Activated CD8-positive, alpha-beta T cell treated with anti-CD3 and anti-CD28 coated beads for 36 hours (primary cell): ENCODE measurements at regions of chr5 and their contacts with region 1.

Region 1: DNA sequence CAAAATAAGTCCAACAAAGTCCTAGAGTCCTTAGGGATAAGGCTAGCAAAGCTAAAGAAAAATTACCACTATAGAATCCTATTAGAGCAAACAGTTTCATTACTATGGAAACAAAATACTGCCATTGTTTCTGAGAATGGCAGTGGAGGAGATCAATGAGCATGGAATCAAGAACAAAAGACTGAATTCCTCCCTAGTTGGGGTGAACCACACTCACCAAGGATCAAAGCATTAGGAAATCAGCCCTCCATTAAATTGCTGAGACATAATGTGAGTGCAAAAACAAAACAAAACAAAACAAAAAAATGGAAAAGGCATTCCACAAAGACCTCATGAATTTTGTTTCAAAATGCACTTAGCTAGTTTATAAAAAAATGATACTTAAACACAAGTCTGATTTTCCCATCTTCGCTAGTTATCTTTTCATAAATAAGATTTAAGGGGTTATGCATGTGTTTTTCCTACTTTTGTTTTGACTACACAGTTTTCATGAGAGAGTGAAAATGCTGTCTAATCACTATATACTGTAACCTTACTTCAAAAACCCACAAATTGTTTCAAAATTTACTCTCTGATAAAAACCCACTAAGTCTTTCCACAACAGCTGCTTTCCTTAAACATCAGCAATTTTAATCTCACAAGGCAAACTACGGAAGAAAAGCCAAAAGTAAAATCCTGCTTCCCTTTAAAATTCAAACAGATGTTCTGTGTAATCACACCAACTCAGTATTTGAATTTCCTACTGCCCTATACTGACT is 9.7 kb downstream of the SERINC5 start:
- DNase-seq: no peak
- ATAC-seq: no peak
- H3K4me3 Mint-ChIP-seq: peak overlapping the region; percentile 28
- H3K27ac Mint-ChIP-seq: peak overlapping the region; percentile 90
- H3K4me1 Mint-ChIP-seq: peaks cover 62% of the 10 kb centered on the region
- H3K27me3 Mint-ChIP-seq: no peaks in the 10 kb centered on the region
- CTCF ChIP-seq: no peak

Region 2: GRCh38 chr5:80101993-80102392 is 144.2 kb before region 1 on chr5:
- CTCF ChIA-PET with region 1: no interaction called
- POLR2A ChIA-PET with region 1: no interaction called
- intact Hi-C with region 1: no loop called
- DNase-seq: no peak
- ATAC-seq: peak; percentile 81
- H3K4me3 Mint-ChIP-seq: no peak overlapping the region
- H3K27ac Mint-ChIP-seq: no peak overlapping the region
- H3K4me1 Mint-ChIP-seq: peaks cover 64% of the 10 kb centered on the region
- H3K27me3 Mint-ChIP-seq: no peaks in the 10 kb centered on the region
- CTCF ChIP-seq: no peak

Region 3: GRCh38 chr5:80125962-80126480 is 120.2 kb before region 1 on chr5:
- CTCF ChIA-PET with region 1: no interaction called
- POLR2A ChIA-PET with region 1: interaction called, 4 read pairs
- intact Hi-C with region 1: loop called (anchors 5 kb)
- DNase-seq: peak; percentile 37
- ATAC-seq: peak; percentile 90
- H3K4me3 Mint-ChIP-seq: peak overlapping the region; percentile 11
- H3K27ac Mint-ChIP-seq: peak overlapping the region; percentile 78
- H3K4me1 Mint-ChIP-seq: peaks cover 55% of the 10 kb centered on the region
- H3K27me3 Mint-ChIP-seq: no peaks in the 10 kb centered on the region
- CTCF ChIP-seq: peak; percentile 36

Region 4: DNA sequence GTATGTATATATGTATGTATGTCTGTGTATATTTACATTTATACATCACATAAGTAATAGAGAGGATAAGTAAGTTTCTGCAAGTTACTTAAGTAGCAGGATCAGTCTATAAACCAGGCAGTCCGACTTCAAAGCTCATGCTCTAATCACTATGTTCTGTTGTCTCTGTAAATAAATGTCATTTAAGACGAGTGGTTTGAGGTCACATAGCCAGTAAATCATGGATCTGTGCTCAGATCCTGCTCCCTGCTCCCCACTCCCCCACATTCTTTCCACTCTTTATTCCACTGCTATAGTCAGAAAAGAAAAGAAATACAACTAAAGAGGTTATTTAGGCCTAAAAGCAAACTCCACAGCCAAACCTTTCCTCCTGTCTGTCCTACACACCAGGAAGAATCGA is 80.7 kb before region 1 on chr5:
- CTCF ChIA-PET with region 1: no interaction called
- POLR2A ChIA-PET with region 1: no interaction called
- intact Hi-C with region 1: no loop called
- DNase-seq: no peak
- ATAC-seq: no peak
- H3K4me3 Mint-ChIP-seq: no peak overlapping the region
- H3K27ac Mint-ChIP-seq: no peak overlapping the region
- H3K4me1 Mint-ChIP-seq: peaks cover 48% of the 10 kb centered on the region
- H3K27me3 Mint-ChIP-seq: no peaks in the 10 kb centered on the region
- CTCF ChIP-seq: no peak

Region 5: DNA sequence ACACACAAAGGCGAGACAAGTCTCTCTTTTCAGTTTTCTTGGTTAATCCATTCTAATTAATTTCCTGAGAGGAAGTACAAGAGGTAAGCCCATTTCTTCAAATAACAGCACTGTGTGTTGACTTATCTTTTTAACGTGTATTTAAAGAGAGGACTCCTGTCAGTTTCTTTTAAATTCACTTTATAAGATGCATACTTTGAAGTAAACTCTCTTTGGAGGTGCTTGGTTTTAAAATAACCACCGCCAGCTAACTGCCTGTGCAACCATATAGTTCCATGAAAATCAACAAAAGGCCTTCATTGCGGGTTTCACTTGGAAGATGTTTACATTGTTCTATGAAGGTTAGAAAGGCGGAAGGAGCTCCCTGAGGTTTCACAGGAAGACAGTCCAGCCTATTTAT is 22.7 kb after region 1 on chr5:
- CTCF ChIA-PET with region 1: no interaction called
- POLR2A ChIA-PET with region 1: no interaction called
- intact Hi-C with region 1: no loop called
- DNase-seq: no peak
- ATAC-seq: no peak
- H3K4me3 Mint-ChIP-seq: peak overlapping the region; percentile 51
- H3K27ac Mint-ChIP-seq: peak overlapping the region; percentile 94
- H3K4me1 Mint-ChIP-seq: peaks cover 37% of the 10 kb centered on the region
- H3K27me3 Mint-ChIP-seq: no peaks in the 10 kb centered on the region
- CTCF ChIP-seq: no peak